GM18951 (cell line): ENCODE measurements at regions of chr6 and their contacts with region 1.

Region 1: GRCh38 chr6:125961117-125961516 is 4.5 kb downstream of the HINT3 start:
- POLR2A ChIP-seq: no peak

Region 2: GRCh38 chr6:125779924-125780539 is 181.1 kb before region 1 on chr6:
- in situ Hi-C with region 1: loop called (anchors 5 kb)
- POLR2A ChIP-seq: no peak

Region 3: DNA sequence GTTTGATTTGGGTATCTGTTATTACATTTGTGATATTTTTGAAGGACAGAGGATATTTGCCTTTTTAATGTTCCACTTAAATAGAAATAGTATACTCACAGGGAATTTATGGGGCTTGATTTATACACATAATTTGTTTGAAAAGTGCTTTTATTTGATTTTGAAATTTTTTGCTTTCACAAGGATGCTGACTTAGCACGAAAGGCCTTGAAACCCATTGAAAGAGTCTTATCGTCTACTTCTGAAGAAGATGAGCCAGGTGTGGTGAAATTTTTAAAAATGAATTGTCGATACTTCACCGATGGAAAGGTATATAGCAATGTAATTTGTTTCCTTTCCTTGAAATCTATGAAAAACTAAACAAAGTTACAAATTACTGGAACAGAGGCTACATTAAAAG is 78.9 kb before region 1 on chr6:
- in situ Hi-C with region 1: no loop called
- POLR2A ChIP-seq: no peak

Region 4: DNA sequence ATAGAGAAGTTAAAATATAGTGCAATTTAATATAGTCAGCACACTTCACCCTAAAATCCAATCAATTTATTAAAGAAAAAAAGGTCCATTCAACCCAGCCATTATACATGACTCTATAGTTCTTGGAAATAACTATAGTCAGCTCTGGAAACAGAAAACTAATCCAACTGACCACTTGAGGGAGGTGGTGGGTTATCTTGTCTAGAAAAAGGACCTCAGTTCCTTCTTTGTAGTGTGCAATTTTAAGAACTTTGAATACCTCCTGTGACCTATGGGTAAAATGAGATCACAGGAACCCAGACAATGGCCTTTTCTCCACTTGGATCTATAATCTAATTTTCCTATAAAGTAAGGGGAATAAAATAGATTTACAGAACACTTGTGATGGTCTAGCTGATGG is 215.2 kb after region 1 on chr6:
- in situ Hi-C with region 1: no loop called
- POLR2A ChIP-seq: no peak

Region 5: DNA sequence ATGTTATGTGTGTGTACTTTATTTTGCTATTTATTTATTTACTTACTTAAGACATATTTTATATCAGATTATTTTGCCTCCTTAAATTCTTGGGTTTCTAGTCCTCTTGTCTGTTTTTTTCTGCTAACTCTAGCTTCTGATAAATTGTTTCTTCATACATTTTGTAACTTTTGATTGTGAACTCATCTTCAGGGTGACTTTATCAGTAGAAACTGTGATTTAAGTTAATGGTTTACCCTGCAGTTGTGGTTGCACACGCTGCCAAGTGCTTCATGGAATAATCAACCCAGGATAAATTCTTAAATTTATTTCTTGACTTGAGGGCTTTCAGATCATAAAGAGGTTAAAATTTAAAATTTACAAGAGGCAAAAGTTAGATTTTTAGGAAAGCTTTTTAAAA is 552.1 kb after region 1 on chr6:
- in situ Hi-C with region 1: no loop called
- POLR2A ChIP-seq: no peak